Calu3 (cell line): ENCODE measurements at regions of chr5 and their contacts with region 1.

Region 1: DNA sequence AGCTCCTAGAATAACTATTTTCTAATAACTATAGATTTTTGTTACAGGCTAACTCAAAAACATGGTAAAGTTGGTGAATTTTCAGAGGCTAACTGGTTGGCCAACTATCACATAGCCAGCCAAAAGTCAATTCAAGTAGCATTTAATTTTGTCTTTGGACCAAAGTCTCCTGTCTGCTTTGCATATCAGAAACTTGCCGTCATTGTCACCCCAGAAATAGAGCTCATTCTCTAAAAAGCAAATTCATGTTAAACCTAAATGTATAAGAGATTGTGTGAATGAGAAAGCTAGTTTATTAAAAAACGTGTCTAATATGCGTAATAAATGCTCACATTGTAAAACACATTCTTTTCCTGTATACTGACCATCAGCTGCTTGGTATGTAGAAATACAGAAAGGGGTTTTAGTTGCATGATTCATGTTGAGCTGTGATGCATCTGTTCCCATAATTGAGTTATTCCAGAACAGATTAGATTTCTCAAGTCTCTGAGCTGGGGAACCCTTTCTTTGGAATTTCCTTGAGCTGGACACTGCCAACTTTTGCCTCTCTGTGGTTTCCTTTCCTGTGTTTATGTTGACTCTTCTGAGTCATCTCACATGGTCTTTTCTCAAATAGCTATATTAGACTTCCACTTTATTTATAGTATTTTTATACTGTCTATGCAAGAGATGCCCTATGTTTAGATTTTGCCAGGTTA is 7.3 kb downstream of the SRFBP1 start:
- DNase-seq: peak; percentile 59
- H3K4me3 Mint-ChIP-seq: peak overlapping the region; percentile 22
- H3K27ac Mint-ChIP-seq: peak overlapping the region; percentile 81
- H3K4me1 Mint-ChIP-seq: peaks cover 26% of the 10 kb centered on the region
- H3K27me3 Mint-ChIP-seq: no peaks in the 10 kb centered on the region
- CTCF ChIP-seq: no peak

Region 2: DNA sequence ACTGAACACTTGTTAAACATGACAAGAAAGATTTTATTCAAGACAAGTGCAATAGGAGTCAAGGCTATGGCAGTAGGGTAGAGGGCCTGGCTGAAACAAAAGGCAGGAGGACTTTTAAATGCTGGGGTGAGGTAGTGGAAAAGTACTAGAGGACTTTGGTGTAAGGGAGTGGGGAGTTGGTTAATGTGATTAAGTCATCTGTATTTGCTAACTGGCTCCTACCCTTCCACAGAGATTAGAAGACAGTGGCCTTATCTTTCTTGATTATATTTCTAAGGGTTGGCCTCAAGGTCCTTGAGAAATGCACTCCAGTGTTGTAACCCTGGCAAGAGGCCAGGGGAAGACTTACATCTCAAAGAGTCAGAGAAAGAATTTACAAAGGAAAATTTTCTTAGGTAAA is 277.6 kb before region 1 on chr5:
- CTCF ChIA-PET with region 1: no interaction called
- intact Hi-C with region 1: loop called (anchors 10 kb)
- DNase-seq: peak; percentile 32
- H3K4me3 Mint-ChIP-seq: no peak overlapping the region
- H3K27ac Mint-ChIP-seq: peak overlapping the region; percentile 69
- H3K4me1 Mint-ChIP-seq: peaks cover 47% of the 10 kb centered on the region
- H3K27me3 Mint-ChIP-seq: no peaks in the 10 kb centered on the region
- CTCF ChIP-seq: no peak

Region 3: GRCh38 chr5:121731377-121731776 is 237.7 kb before region 1 on chr5:
- CTCF ChIA-PET with region 1: no interaction called
- intact Hi-C with region 1: no loop called
- DNase-seq: no peak
- H3K4me3 Mint-ChIP-seq: no peak overlapping the region
- H3K27ac Mint-ChIP-seq: no peak overlapping the region
- H3K4me1 Mint-ChIP-seq: no peaks in the 10 kb centered on the region
- H3K27me3 Mint-ChIP-seq: no peaks in the 10 kb centered on the region
- CTCF ChIP-seq: no peak

Region 4: DNA sequence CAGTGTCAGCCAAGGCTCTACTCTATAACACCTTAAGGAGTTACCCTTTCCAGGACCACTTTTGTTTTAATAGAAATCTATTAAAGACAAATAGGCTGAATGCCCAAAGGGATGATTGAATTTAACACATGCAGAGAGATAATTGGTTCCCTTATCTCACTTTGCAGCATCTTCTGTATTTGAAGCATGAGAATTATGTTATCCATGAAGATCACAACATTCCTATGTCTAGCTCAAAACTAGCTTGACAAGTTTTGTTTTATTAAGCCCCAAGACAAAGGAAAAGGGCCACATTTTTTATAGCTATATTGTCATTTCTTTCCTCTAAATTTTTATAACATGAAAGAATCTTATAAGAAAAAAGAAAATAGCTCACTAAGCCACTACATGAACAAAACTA is 175.3 kb before region 1 on chr5:
- CTCF ChIA-PET with region 1: no interaction called
- intact Hi-C with region 1: no loop called
- DNase-seq: no peak
- H3K4me3 Mint-ChIP-seq: no peak overlapping the region
- H3K27ac Mint-ChIP-seq: no peak overlapping the region
- H3K4me1 Mint-ChIP-seq: no peaks in the 10 kb centered on the region
- H3K27me3 Mint-ChIP-seq: no peaks in the 10 kb centered on the region
- CTCF ChIP-seq: no peak

Region 5: GRCh38 chr5:121899346-121899745 is 69.7 kb before region 1 on chr5:
- CTCF ChIA-PET with region 1: no interaction called
- intact Hi-C with region 1: no loop called
- DNase-seq: no peak
- H3K4me3 Mint-ChIP-seq: no peak overlapping the region
- H3K27ac Mint-ChIP-seq: no peak overlapping the region
- H3K4me1 Mint-ChIP-seq: no peaks in the 10 kb centered on the region
- H3K27me3 Mint-ChIP-seq: no peaks in the 10 kb centered on the region
- CTCF ChIP-seq: no peak

Region 6: GRCh38 chr5:122076664-122077365 is 107.8 kb after region 1 on chr5:
- CTCF ChIA-PET with region 1: interaction called, 27 read pairs
- intact Hi-C with region 1: loop called (anchors 1 kb)
- DNase-seq: peak; percentile 96
- H3K4me3 Mint-ChIP-seq: peak overlapping the region; percentile 100
- H3K27ac Mint-ChIP-seq: peak overlapping the region; percentile 94
- H3K4me1 Mint-ChIP-seq: peaks cover 26% of the 10 kb centered on the region
- H3K27me3 Mint-ChIP-seq: no peaks in the 10 kb centered on the region
- CTCF ChIP-seq: peak; percentile 85

Region 7: GRCh38 chr5:122101636-122102285 is 132.7 kb after region 1 on chr5:
- CTCF ChIA-PET with region 1: interaction called, 12 read pairs
- intact Hi-C with region 1: loop called (anchors 1 kb)
- DNase-seq: peak; percentile 13
- H3K4me3 Mint-ChIP-seq: no peak overlapping the region
- H3K27ac Mint-ChIP-seq: no peak overlapping the region
- H3K4me1 Mint-ChIP-seq: peaks cover 25% of the 10 kb centered on the region
- H3K27me3 Mint-ChIP-seq: no peaks in the 10 kb centered on the region
- CTCF ChIP-seq: peak; percentile 70

Region 8: DNA sequence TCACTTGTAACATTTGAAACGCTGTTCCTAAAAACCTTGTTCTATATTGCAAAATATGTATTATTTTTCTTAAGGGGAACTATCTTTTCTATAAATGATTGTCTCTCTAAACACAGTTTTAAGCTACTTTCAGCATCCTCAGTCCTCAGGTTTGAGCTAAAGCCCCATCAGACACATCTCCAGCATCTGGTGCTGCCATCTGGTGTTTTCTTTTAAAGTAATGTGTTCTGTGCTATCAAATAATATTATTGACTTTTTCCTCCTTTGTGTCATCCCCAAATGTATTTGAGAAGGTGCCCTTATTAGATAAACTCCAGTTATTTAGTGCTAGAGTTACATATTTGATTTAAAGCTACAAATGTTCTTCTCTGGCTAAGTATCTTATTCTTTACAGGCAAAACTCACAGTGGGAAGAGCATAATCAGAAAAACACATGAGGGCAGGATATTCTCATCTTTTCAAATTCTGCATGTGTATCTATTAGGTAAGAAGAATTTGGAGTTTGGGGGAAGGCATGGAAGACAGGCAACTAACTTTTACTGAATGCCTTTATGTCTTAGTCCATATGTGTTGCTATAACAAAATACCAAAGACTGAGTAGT is 187.8 kb after region 1 on chr5:
- CTCF ChIA-PET with region 1: interaction called, 6 read pairs
- intact Hi-C with region 1: loop called (anchors 1 kb)
- DNase-seq: peak; percentile 36
- H3K4me3 Mint-ChIP-seq: no peak overlapping the region
- H3K27ac Mint-ChIP-seq: no peak overlapping the region
- H3K4me1 Mint-ChIP-seq: peaks cover 3% of the 10 kb centered on the region
- H3K27me3 Mint-ChIP-seq: no peaks in the 10 kb centered on the region
- CTCF ChIP-seq: peak; percentile 35

Region 9: DNA sequence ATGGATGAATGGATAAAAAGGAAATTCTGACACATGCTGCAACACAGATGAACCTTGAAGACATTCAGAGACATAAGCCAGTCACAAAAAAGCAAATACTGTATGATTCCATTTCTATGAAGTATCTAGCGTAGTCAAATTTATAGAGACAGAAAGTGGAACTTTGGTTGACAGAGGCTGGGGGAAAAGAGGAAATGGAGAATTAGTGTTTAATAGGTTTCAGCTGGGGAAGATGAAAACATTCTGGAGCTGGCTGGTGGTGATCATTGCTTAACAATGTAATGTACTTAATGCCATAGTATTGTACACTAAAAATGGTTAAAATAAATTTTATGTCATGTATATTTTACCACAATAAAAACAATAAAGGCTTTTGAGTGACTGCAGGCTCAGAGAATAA is 1043.3 kb after region 1 on chr5:
- CTCF ChIA-PET with region 1: no interaction called
- intact Hi-C with region 1: no loop called
- DNase-seq: no peak
- H3K4me3 Mint-ChIP-seq: no peak overlapping the region
- H3K27ac Mint-ChIP-seq: no peak overlapping the region
- H3K4me1 Mint-ChIP-seq: peaks cover 8% of the 10 kb centered on the region
- H3K27me3 Mint-ChIP-seq: no peaks in the 10 kb centered on the region
- CTCF ChIP-seq: no peak